Left colon (tissue), 2 donors: ENCODE measurements at regions of chr3 and their contacts with region 1.

Region 1: GRCh38 chr3:195271116-195271858 is at the start of gene XXYLT1:
- DNase-seq: peak; percentile 87 to 94
- ATAC-seq: peak; percentile 89
- total RNA-seq, gene XXYLT1: 8.0 to 13.5 TPM

Region 2: DNA sequence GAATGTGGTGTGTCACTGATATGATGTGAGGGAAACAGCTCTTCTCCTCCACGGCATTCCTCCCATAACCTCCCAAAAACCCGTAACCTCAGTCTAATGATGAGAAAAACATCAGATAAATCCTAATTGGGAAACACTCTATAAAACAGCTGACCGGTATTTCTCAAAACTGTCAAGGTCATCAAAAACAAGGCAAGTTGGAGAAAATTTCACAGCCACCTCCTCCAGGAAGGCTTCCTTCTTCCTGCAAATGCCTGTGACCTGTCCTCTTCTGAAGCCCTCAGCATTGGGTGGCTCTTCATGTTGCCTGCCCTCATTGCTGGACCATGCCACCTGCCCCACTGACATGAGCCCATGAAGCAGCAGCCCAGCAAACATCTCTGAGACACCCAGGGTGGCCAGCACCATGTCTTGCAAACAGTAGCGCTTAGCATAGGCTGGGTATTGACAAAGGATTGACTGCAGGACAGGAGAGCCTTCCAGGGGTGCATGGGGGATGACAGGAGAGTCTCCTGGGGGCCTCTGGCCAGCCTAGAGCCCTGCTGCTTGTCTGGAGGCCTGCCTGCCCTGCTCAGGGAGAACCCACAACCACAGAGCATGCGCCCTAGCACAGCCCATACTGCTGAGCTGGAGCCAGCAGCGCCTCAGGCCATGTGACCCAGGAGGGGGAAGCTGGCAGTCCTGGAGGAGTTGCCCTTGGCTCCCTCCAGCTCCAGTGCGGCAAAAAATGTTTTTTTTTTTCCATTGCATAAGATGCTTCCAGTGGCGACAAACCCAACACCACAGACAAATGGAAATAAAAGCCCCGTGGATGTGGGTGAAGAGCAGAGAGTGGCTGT is 50.1 kb before region 1 on chr3:
- intact Hi-C with region 1: no loop called
- DNase-seq: peak in 1 of 2 donors; percentile 50
- ATAC-seq: no peak

Region 3: GRCh38 chr3:195522254-195523023 is 251.2 kb after region 1 on chr3:
- intact Hi-C with region 1: loop called in 1 of 2 experiments (anchors 5 kb)
- DNase-seq: no peak
- ATAC-seq: peak; percentile 20